ENCODE measurements at regions of chr9 and their contacts with region 1.

Region 1: GRCh38 chr9:100575765-100576386 is 2.0 kb upstream of the CAVIN4 start:
- DNase-seq: peak; percentile 21
- H3K4me3 Mint-ChIP-seq: no peak overlapping the region
- H3K27ac Mint-ChIP-seq: no peak overlapping the region
- H3K4me1 Mint-ChIP-seq: peaks cover 17% of the 10 kb centered on the region
- H3K27me3 Mint-ChIP-seq: no peaks in the 10 kb centered on the region
- CTCF ChIP-seq: no peak

Region 2: GRCh38 chr9:100511205-100511604 is 64.7 kb before region 1 on chr9:
- CTCF ChIA-PET with region 1: no interaction called
- intact Hi-C with region 1: loop called (anchors 5 kb)
- DNase-seq: no peak
- H3K4me3 Mint-ChIP-seq: no peak overlapping the region
- H3K27ac Mint-ChIP-seq: no peak overlapping the region
- H3K4me1 Mint-ChIP-seq: no peaks in the 10 kb centered on the region
- H3K27me3 Mint-ChIP-seq: no peaks in the 10 kb centered on the region
- CTCF ChIP-seq: no peak

Region 3: DNA sequence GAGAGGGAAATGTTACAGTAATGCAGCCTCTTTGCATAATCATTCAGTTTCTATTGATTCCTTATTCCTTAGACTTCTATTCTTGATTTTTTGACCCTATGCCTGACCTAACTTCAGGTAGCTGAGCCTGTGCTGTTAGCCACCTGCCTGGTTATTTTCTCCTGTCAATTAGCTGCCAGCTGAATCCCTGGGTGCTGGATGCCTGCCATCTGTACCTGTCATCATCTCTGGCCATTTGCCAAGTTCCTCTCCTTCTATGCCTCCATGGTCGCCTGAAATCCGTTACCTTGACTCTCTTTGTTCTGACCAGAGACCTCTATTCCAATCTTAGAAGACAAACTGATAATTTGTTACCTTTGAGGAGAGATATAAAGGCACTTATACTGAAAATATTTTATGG is 180.3 kb after region 1 on chr9:
- CTCF ChIA-PET with region 1: no interaction called
- intact Hi-C with region 1: no loop called
- DNase-seq: no peak
- H3K4me3 Mint-ChIP-seq: no peak overlapping the region
- H3K27ac Mint-ChIP-seq: no peak overlapping the region
- H3K4me1 Mint-ChIP-seq: no peaks in the 10 kb centered on the region
- H3K27me3 Mint-ChIP-seq: no peaks in the 10 kb centered on the region
- CTCF ChIP-seq: no peak

Measured in Calu3 (cell line).